ENCODE measurements at regions of chr9 and their contacts with region 1.

Region 1: GRCh38 chr9:133485361-133486260 is 6.7 kb upstream of the SLC2A6 start:
- DNase-seq: peak; percentile 41
- ATAC-seq: peak; percentile 45
- H3K4me3 Mint-ChIP-seq: no peak overlapping the region
- H3K27ac Mint-ChIP-seq: no peak overlapping the region
- H3K4me1 Mint-ChIP-seq: peaks cover 7% of the 10 kb centered on the region
- H3K27me3 Mint-ChIP-seq: no peaks in the 10 kb centered on the region

Region 2: DNA sequence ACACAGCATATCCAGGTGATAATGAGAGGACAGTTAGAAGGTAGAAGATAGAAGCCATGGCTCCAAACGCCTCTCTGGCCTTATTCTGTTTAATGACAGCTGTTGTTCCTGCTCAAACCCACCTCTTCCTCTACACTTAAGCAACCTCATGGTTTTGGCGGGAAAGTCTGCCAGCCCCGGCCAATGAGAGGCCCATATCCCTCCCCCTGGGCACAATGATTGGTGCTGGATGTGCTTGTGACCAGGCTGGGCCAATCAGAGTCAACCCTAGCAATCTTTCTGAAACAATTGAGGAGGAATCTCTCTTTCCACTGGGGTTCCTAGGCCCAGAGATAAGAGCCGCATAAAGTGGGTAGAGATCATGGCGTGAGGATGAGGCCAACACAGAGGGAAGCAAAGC is 511.9 kb before region 1 on chr9:
- CTCF ChIA-PET with region 1: no interaction called
- POLR2A ChIA-PET with region 1: no interaction called
- intact Hi-C with region 1: loop called in 1 of 2 experiments (anchors 1 kb)
- DNase-seq: peak; percentile 51
- ATAC-seq: peak; percentile 64
- H3K4me3 Mint-ChIP-seq: no peak overlapping the region
- H3K27ac Mint-ChIP-seq: no peak overlapping the region
- H3K4me1 Mint-ChIP-seq: peaks cover 4% of the 10 kb centered on the region
- H3K27me3 Mint-ChIP-seq: peaks cover 18% of the 10 kb centered on the region

Region 3: GRCh38 chr9:133041958-133042357 is 443.7 kb before region 1 on chr9:
- CTCF ChIA-PET with region 1: no interaction called
- POLR2A ChIA-PET with region 1: no interaction called
- intact Hi-C with region 1: loop called in 1 of 2 experiments (anchors 1 kb)
- DNase-seq: no peak
- ATAC-seq: no peak
- H3K4me3 Mint-ChIP-seq: no peak overlapping the region
- H3K27ac Mint-ChIP-seq: no peak overlapping the region
- H3K4me1 Mint-ChIP-seq: peaks cover 10% of the 10 kb centered on the region
- H3K27me3 Mint-ChIP-seq: no peaks in the 10 kb centered on the region

Region 4: GRCh38 chr9:133238851-133239532 is 246.6 kb before region 1 on chr9:
- CTCF ChIA-PET with region 1: interaction called, 8 read pairs
- POLR2A ChIA-PET with region 1: no interaction called
- intact Hi-C with region 1: loop called in 1 of 2 experiments (anchors 1 kb)
- DNase-seq: peak; percentile 88
- ATAC-seq: peak; percentile 97
- H3K4me3 Mint-ChIP-seq: peak overlapping the region; percentile 52
- H3K27ac Mint-ChIP-seq: no peak overlapping the region
- H3K4me1 Mint-ChIP-seq: peaks cover 7% of the 10 kb centered on the region
- H3K27me3 Mint-ChIP-seq: peaks cover 5% of the 10 kb centered on the region

Region 5: DNA sequence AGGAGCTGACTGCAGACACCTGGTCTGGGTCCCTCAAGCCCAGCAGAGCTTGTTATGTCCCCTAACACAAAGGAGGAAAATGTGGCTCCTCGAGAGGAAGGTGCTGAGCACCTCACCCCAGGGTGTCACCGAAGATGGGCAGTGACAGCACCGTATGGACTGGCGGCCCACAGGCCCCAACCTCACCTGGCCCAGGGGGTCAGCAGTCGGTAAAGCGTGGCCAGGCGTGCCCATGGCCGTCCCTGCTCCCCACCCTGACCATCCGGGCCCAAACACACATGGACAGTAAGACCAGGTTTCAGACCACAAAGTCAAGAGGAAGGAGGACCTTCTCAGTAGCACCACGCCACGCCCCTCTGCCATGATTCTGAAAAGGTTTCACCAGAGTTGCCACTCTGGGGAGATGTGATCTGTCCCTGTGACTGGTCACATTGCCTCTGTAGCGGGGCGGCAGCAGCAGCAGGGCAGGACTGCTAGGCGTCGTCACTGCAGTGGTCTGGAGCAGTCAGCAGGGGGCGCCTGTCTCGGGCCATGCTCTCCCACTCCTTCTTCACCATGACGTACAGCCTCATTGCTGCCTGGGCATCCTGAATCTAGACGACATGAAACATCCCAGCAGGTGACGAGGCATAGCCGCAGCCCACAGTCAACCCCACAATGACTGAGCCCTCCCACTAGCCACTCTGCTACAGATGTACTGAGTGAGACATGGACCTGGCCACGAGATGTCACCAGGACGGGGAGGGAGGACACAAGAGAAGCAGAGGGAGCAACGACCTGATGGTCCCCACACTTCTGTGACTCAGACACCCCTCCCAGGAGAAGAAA is 78.9 kb before region 1 on chr9:
- CTCF ChIA-PET with region 1: interaction called, 6 read pairs
- POLR2A ChIA-PET with region 1: no interaction called
- intact Hi-C with region 1: loop called (anchors 1 kb)
- DNase-seq: peak; percentile 93
- ATAC-seq: peak; percentile 94
- H3K4me3 Mint-ChIP-seq: no peak overlapping the region
- H3K27ac Mint-ChIP-seq: peak overlapping the region; percentile 48
- H3K4me1 Mint-ChIP-seq: peaks cover 6% of the 10 kb centered on the region
- H3K27me3 Mint-ChIP-seq: no peaks in the 10 kb centered on the region

Region 6: GRCh38 chr9:133545494-133546286 is 60.1 kb after region 1 on chr9:
- CTCF ChIA-PET with region 1: no interaction called
- POLR2A ChIA-PET with region 1: no interaction called
- intact Hi-C with region 1: no loop called
- DNase-seq: no peak
- ATAC-seq: no peak
- H3K4me3 Mint-ChIP-seq: no peak overlapping the region
- H3K27ac Mint-ChIP-seq: no peak overlapping the region
- H3K4me1 Mint-ChIP-seq: no peaks in the 10 kb centered on the region
- H3K27me3 Mint-ChIP-seq: no peaks in the 10 kb centered on the region

Region 7: GRCh38 chr9:133759146-133759900 is 273.7 kb after region 1 on chr9:
- CTCF ChIA-PET with region 1: no interaction called
- POLR2A ChIA-PET with region 1: no interaction called
- intact Hi-C with region 1: no loop called
- DNase-seq: no peak
- ATAC-seq: no peak
- H3K4me3 Mint-ChIP-seq: no peak overlapping the region
- H3K27ac Mint-ChIP-seq: no peak overlapping the region
- H3K4me1 Mint-ChIP-seq: no peaks in the 10 kb centered on the region
- H3K27me3 Mint-ChIP-seq: peaks cover 3% of the 10 kb centered on the region

Measured in activated CD4-positive, alpha-beta T cell treated with anti-CD3 and anti-CD28 coated beads for 36 hours (primary cell).